ENCODE measurements at regions of chr12 and their contacts with region 1.

Region 1: DNA sequence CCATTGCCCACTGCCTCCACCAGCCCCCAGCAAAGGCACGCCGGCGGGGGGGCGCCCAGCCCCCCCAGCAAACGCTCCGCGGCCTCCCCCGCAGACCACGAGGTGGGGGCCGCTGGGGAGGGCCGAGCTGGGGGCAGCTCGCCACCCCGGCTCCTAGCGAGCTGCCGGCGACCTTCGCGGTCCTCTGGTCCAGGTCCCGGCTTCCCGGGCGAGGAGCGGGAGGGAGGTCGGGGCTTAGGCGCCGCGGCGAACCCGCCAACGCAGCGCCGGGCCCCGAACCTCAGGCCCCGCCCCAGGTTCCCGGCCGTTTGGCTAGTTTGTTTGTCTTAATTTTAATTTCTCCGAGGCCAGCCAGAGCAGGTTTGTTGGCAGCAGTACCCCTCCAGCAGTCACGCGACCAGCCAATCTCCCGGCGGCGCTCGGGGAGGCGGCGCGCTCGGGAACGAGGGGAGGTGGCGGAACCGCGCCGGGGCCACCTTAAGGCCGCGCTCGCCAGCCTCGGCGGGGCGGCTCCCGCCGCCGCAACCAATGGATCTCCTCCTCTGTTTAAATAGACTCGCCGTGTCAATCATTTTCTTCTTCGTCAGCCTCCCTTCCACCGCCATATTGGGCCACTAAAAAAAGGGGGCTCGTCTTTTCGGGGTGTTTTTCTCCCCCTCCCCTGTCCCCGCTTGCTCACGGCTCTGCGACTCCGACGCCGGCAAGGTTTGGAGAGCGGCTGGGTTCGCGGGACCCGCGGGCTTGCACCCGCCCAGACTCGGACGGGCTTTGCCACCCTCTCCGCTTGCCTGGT is at the start of gene CDKN1B:
- DNase-seq: peak; percentile 79 to 93 (median 86)
- ATAC-seq: peak; percentile 66 to 68
- H3K4me3 Mint-ChIP-seq: peak within 1 kb of the TSS; percentile 94 to 100 (median 99)
- H3K27ac Mint-ChIP-seq: peak within 1 kb of the TSS; percentile 92 to 100 (median 99)
- H3K4me1 Mint-ChIP-seq: peaks cover 39 to 67% (median 60%) of the 10 kb centered on the region in 4 donors
- H3K27me3 Mint-ChIP-seq: no peaks in the 10 kb centered on the region
- polyA plus RNA-seq, gene CDKN1B: 8.3 to 26.9 (median 20.6) TPM

Region 2: GRCh38 chr12:12356886-12357718 is 359.9 kb before region 1 on chr12 and contains the start of gene BORCS5:
- POLR2A ChIA-PET with region 1: interaction called, 78 read pairs
- DNase-seq: peak; percentile 91 to 99 (median 98)
- ATAC-seq: peak; percentile 89 to 93
- H3K4me3 Mint-ChIP-seq: peak within 1 kb of the TSS; percentile 90 to 98 (median 96)
- H3K27ac Mint-ChIP-seq: peak within 1 kb of the TSS; percentile 95 to 100 (median 99)
- H3K4me1 Mint-ChIP-seq: peaks cover 24 to 52% (median 45%) of the 10 kb centered on the region in 4 donors
- H3K27me3 Mint-ChIP-seq: no peaks in the 10 kb centered on the region
- polyA plus RNA-seq, gene BORCS5: 14.2 to 18.4 (median 15.7) TPM

Region 3: GRCh38 chr12:12562585-12563261 is 154.3 kb before region 1 on chr12 and contains the start of gene DUSP16:
- POLR2A ChIA-PET with region 1: interaction called, 16 read pairs
- DNase-seq: peak; percentile 57 to 92 (median 84)
- ATAC-seq: peak; percentile 69 to 70
- H3K4me3 Mint-ChIP-seq: peak within 1 kb of the TSS; percentile 85 to 95 (median 94)
- H3K27ac Mint-ChIP-seq: peak within 1 kb of the TSS; percentile 93 to 99 (median 98)
- H3K4me1 Mint-ChIP-seq: peaks cover 11 to 37% (median 30%) of the 10 kb centered on the region in 4 donors
- H3K27me3 Mint-ChIP-seq: no peaks in the 10 kb centered on the region
- polyA plus RNA-seq, gene DUSP16: 4.5 to 4.7 (median 4.6) TPM

Region 4: GRCh38 chr12:12611512-12612306 is 105.3 kb before region 1 on chr12 and contains the start of gene CREBL2:
- POLR2A ChIA-PET with region 1: interaction called, 12 read pairs
- DNase-seq: peak; percentile 74 to 93 (median 88)
- ATAC-seq: peak; percentile 89
- H3K4me3 Mint-ChIP-seq: peak within 1 kb of the TSS; percentile 87 to 99 (median 92)
- H3K27ac Mint-ChIP-seq: peak within 1 kb of the TSS; percentile 89 to 100 (median 99)
- H3K4me1 Mint-ChIP-seq: peaks cover 19 to 66% (median 54%) of the 10 kb centered on the region in 4 donors
- H3K27me3 Mint-ChIP-seq: no peaks in the 10 kb centered on the region
- polyA plus RNA-seq, gene CREBL2: 36.5 to 46.8 (median 44.7) TPM

Region 5: DNA sequence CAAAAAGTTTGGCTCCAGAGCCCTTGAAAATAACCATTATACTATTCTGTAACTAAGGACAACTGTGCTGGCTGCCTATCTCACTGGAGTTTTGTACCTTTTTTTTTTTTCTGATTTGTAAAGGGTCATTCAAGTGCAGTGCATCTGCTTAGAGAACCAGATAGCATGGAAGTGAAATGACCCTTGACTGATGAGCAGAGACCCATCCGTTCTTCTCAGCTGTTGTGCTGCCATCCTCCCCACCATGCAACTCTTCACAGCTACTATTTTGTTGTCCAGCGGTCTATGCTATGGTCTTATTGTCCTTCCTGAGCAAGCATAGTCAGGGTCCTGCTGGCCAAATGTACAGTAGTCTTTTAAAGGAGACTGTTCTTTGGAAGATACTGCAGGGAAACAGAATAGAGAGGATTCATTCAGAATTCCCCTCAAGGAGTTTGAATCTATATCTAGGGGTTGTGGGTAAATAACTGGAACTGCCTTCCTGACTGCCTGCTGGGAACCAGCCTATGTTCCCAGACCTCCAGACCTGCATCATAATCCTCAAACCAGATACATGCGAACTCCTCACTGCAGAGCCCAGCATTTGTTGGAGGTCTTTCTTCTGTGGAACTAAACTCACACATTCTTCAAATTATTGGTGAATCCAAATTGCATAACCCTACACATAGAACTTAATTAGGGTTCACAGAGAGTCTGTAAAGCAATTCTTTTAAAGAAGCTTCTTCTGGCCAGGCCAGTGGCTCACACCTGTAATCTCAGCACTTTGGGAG is 62.1 kb before region 1 on chr12:
- POLR2A ChIA-PET with region 1: interaction called, 10 read pairs
- DNase-seq: no peak
- ATAC-seq: no peak
- H3K4me3 Mint-ChIP-seq: peak overlapping the region in 1 of 10 donors; percentile 38
- H3K27ac Mint-ChIP-seq: peak overlapping the region in 4 of 10 donors; percentile 15 to 79 (median 37)
- H3K4me1 Mint-ChIP-seq: peaks cover 4 to 9% (median 7%) of the 10 kb centered on the region in 4 donors
- H3K27me3 Mint-ChIP-seq: peaks cover 0 to 2% (median 0%) of the 10 kb centered on the region in 5 donors

Region 6: GRCh38 chr12:12736759-12737676 is 20.0 kb after region 1 on chr12:
- POLR2A ChIA-PET with region 1: interaction called, 150 read pairs
- DNase-seq: peak in 8 of 10 donors; percentile 8 to 76 (median 54)
- ATAC-seq: peak; percentile 85 to 88
- H3K4me3 Mint-ChIP-seq: peak overlapping the region; percentile 65 to 82 (median 75)
- H3K27ac Mint-ChIP-seq: peak overlapping the region; percentile 88 to 96 (median 90)
- H3K4me1 Mint-ChIP-seq: peaks cover 9 to 46% (median 30%) of the 10 kb centered on the region in 4 donors
- H3K27me3 Mint-ChIP-seq: no peaks in the 10 kb centered on the region

Region 7: GRCh38 chr12:12803186-12803585 is 86.2 kb after region 1 on chr12:
- POLR2A ChIA-PET with region 1: interaction called, 10 read pairs
- DNase-seq: peak in 2 of 10 donors; percentile 13 to 69
- ATAC-seq: peak in 1 of 2 donors; percentile 59
- H3K4me3 Mint-ChIP-seq: peak overlapping the region in 3 of 10 donors; percentile 6 to 22 (median 16)
- H3K27ac Mint-ChIP-seq: peak overlapping the region in 8 of 10 donors; percentile 41 to 87 (median 80)
- H3K4me1 Mint-ChIP-seq: peaks cover 18 to 59% (median 41%) of the 10 kb centered on the region in 4 donors
- H3K27me3 Mint-ChIP-seq: no peaks in the 10 kb centered on the region

Measured in naive thymus-derived CD8-positive, alpha-beta T cell (primary cell).